Breast epithelium (tissue), 4 donors: ENCODE measurements at regions of chr3 and their contacts with region 1.

Region 1: GRCh38 chr3:10349801-10350200 is 28.9 kb upstream of the SEC13 start:
- DNase-seq: no peak
- H3K4me3 ChIP-seq: no peak overlapping the region
- H3K27ac ChIP-seq: no peak overlapping the region
- H3K4me1 ChIP-seq: no peaks in the 10 kb centered on the region
- H3K27me3 ChIP-seq: no peaks in the 10 kb centered on the region
- CTCF ChIP-seq: no peak
- POLR2A ChIP-seq: no peak

Region 2: DNA sequence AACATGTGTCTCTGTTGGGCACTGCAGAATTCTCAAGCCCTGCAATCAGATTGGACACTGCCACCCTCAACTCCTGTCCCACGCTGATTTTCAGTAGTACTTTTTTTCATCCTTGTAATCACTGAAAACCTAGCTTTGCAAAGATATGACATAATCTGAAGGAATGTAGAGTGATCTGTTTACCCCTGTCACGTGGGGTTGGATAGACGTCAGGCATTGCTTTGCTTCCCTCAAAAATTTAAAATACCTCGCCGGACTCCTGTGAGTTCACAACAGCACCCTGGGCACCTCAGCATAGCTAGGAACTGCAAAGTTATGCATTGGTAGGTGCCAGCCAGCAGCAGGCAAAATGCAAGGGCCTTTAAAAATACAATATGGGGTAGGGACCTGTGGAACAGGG is 1509.2 kb before region 1 on chr3:
- intact Hi-C with region 1: loop called (anchors 5 kb)
- DNase-seq: no peak
- H3K4me3 ChIP-seq: no peak overlapping the region
- H3K27ac ChIP-seq: no peak overlapping the region
- H3K4me1 ChIP-seq: no peaks in the 10 kb centered on the region
- H3K27me3 ChIP-seq: no peaks in the 10 kb centered on the region
- CTCF ChIP-seq: no peak
- POLR2A ChIP-seq: no peak

Region 3: DNA sequence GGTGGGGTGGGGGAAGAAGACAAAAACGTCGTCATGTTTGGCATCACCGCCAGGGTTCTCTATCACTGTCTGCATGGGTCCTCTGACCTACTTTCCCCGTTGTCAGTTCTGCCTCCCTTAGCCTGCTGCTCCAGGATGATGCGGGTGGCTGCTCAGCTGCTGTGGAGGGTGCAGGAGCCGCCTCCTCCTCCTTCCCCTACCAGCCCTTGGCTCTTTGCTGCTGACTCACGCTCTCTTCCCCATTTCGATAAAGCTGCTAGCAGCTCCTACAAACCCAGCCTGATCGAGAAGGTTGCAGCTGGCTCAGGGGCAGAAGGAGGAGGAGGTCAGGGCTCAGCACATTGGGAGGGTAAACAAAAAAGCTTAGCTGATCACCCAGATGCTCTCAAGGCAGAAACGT is 20.6 kb after region 1 on chr3:
- intact Hi-C with region 1: loop called (anchors 1 kb)
- DNase-seq: no peak
- H3K4me3 ChIP-seq: no peak overlapping the region
- H3K27ac ChIP-seq: no peak overlapping the region
- H3K4me1 ChIP-seq: no peaks in the 10 kb centered on the region
- H3K27me3 ChIP-seq: no peaks in the 10 kb centered on the region
- CTCF ChIP-seq: no peak
- POLR2A ChIP-seq: no peak